GM12878 (cell line): ENCODE measurements at regions of chr5 and their contacts with region 1.

Region 1: DNA sequence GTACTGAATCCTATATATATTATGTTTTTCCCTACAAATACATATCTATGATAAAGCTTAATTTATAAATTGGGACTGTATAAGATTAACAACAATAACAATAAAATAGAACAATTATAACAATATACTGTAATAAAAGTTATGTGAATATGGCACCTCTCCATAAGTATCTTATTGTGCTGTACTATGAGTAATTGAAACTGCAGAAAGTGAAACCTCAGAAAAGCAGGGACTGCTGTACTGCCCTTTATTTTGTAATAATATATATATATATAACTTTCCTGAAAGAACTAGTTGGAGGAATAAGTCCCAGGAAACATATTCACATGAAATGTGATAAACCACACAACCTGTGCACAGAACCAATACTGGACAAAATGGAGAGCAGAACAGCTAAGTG is 77.3 kb downstream of the PAM start:
- DNase-seq: no peak
- ATAC-seq: peak; percentile 61
- H3K4me3 ChIP-seq: no peak overlapping the region
- H3K27ac ChIP-seq: no peak overlapping the region
- H3K4me1 ChIP-seq: no peaks in the 10 kb centered on the region
- H3K27me3 ChIP-seq: no peaks in the 10 kb centered on the region
- CTCF ChIP-seq: no peak
- EP300 ChIP-seq: no peak
- POLR2A ChIP-seq: no peak
- RAD21 ChIP-seq: no peak

Region 2: DNA sequence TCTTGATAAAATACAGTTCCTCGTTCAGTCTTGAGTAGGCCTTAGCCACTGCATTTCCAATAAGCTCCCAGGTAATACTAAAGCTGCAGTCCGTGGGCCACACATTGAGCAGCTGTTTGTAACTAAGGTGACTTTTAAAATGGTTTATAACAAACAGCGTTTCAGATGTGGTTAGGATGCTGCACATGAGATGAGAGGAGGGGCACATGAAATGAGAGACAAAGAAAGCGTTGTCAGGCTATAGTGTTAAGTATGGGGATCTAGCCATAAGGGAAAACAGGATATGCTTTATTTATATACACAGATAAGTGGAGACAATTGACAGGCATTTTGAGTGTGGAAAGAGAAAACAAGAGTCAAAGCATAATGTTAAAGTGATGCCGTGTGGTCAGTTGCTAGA is 12.6 kb after region 1 on chr5:
- CTCF ChIA-PET with region 1: interaction called, 6 read pairs
- POLR2A ChIA-PET with region 1: no interaction called
- RAD21 ChIA-PET with region 1: no interaction called
- SMC1A ChIA-PET with region 1: interaction called, 10 read pairs
- in situ Hi-C with region 1: no loop called
- intact Hi-C with region 1: no loop called
- DNase-seq: no peak
- ATAC-seq: no peak
- H3K4me3 ChIP-seq: no peak overlapping the region
- H3K27ac ChIP-seq: no peak overlapping the region
- H3K4me1 ChIP-seq: no peaks in the 10 kb centered on the region
- H3K27me3 ChIP-seq: no peaks in the 10 kb centered on the region
- CTCF ChIP-seq: no peak
- EP300 ChIP-seq: no peak
- POLR2A ChIP-seq: no peak
- RAD21 ChIP-seq: no peak